Esophagus squamous epithelium (tissue), 5 donors: ENCODE measurements at regions of chr1 and their contacts with region 1.

Region 1: DNA sequence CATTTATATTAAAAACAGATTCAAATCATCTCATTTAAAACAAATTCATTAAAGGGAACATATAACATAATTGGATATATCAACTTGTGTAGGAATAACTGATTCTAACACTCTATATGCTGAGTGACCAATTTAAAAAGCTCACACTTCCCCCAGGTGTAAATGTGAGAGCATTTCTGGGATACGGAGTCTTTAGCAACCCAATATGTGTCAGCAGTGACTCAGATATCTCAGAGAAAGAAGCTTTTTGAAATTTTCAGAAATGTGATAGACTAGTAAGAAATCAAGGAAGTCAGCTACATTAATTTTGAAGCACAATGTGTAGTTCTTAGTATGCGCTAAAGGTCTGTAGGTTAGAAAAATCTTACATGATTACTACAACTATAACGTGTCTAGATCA is 87.9 kb upstream of the SERTAD4 start:
- DNase-seq: no peak
- H3K4me3 ChIP-seq: no peak overlapping the region
- H3K27ac ChIP-seq: no peak overlapping the region
- H3K4me1 ChIP-seq: no peaks in the 10 kb centered on the region
- H3K27me3 ChIP-seq: no peaks in the 10 kb centered on the region
- CTCF ChIP-seq: no peak
- POLR2A ChIP-seq: no peak

Region 2: GRCh38 chr1:209962856-209963255 is 181.9 kb before region 1 on chr1:
- intact Hi-C with region 1: no loop called
- DNase-seq: no peak
- H3K4me3 ChIP-seq: no peak overlapping the region
- H3K27ac ChIP-seq: no peak overlapping the region
- H3K4me1 ChIP-seq: no peaks in the 10 kb centered on the region
- H3K27me3 ChIP-seq: no peaks in the 10 kb centered on the region
- CTCF ChIP-seq: no peak
- POLR2A ChIP-seq: no peak

Region 3: GRCh38 chr1:210311726-210312493 is 167.2 kb after region 1 on chr1:
- intact Hi-C with region 1: loop called (anchors 5 kb)
- DNase-seq: no peak
- H3K4me3 ChIP-seq: peak overlapping the region in 2 of 4 donors; percentile 37 to 66
- H3K27ac ChIP-seq: peak overlapping the region in 3 of 4 donors; percentile 48 to 80 (median 74)
- H3K4me1 ChIP-seq: peaks cover 3 to 34% (median 15%) of the 10 kb centered on the region in 3 donors
- H3K27me3 ChIP-seq: peaks cover 0 to 19% (median 0%) of the 10 kb centered on the region in 4 donors
- CTCF ChIP-seq: no peak
- POLR2A ChIP-seq: no peak

Region 4: GRCh38 chr1:210352575-210352974 is 207.8 kb after region 1 on chr1:
- intact Hi-C with region 1: no loop called
- DNase-seq: no peak
- H3K4me3 ChIP-seq: no peak overlapping the region
- H3K27ac ChIP-seq: no peak overlapping the region
- H3K4me1 ChIP-seq: no peaks in the 10 kb centered on the region
- H3K27me3 ChIP-seq: no peaks in the 10 kb centered on the region
- CTCF ChIP-seq: no peak
- POLR2A ChIP-seq: no peak